ENCODE measurements at regions of chr7 and their contacts with region 1.

Region 1: DNA sequence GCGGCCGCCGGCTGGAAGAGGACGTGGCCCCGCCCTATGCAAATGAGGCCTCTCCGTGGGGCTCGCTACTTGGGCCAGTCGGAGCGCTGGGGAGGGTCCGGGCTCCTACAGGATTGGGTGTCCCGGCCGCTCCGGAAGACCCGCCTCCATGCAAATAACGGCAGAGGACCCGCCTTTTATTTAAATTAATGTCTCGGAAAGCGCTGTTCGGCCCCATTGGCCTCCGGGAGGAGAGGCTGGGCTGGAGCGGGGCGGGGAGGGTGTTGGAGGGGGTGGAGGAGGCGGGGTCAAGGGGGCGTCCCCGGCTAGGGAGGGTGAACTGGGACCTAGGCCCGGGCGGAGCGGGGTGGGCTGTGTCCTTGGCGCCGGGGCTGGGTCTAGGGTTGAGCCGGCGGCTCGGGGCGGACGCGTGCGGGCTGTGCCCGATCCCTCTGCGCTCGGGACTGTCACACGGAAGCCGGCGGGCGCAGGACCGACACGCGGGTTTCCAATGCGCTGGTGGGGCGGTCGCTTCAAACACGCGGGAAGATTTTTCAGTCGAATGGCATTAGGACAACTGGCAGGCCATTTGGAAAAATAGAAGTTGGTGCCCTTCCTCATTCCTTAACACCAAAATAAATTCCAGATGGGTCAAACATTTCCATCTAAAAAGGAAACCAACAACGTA is 344 bp upstream of the POLM start:
- DNase-seq: peak; percentile 100
- ATAC-seq: peak; percentile 91

Region 2: DNA sequence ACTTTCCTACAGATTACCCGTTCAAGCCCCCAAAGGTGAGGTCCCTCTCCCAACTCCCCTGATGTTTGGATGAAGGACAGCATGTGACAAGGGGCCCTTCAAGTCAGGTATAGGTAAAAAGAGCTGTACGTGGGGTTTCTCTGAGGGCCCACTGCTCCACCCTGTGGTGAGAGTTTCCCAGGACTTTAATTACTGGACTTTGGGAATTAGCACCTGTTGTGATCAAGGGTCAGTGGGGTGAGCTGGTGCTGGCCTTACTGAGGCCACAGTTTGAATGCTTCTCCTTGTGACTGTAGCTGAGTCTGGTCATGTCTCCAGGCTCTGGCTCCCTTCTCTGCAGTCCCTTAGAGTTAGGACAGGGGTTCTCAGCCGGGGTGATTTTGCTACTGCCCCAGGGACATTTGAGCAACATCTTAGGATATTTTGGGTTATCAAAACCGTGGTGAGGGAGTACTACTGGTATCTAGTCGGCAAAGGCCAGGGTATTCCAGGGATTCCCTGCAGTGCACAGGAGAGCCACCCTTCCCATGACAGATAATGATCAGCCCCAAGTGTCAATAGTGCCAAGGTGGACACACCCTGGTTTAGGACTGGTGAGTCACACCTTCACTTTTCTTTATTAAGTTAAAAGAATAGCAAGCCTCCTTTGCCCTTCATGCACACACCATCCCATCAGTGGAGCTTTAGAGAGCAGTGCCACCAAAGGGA is 139.5 kb before region 1 on chr7:
- intact Hi-C with region 1: no loop called
- DNase-seq: no peak
- ATAC-seq: peak; percentile 22

Region 3: DNA sequence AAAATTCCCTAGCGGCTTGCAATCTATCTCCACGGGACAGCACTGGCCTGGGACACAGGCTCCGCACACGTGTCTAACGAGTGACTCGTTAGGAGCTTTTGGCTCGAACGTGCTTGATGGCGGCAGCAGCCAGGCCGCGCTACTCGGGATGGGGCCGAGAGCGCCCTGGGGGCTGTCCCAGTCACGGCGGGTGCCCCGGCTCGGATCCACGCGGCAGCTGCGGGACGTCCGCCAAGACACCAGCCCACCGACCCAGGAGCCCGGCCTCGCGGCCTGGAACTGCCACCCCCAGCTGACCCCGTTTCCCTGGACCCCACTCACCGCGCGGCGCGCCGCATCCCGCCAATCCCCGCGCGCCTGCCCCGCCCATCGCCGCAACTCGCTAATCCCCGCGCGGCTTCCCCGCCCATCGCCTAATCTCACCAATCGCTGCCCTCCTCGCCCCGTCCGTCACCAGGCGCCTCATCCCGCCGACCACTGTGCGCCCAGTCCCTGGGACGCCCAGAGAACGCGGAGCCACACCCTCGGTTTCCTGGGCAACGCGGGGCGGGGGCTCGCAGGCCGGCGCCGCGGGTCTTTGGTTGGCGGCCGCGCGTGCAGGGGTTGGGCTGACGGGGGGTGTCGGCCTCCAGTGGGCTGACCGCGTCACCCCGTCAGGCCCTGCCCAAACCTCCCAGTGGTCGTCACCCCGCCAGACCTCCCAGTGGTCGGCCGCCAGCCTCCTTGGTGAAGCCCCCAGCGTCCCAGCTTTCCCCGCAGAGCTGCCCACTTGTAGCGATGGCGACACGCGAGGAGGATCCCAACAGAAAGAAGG is 40.7 kb after region 1 on chr7 and contains the start of gene POLD2:
- intact Hi-C with region 1: loop called (anchors 5 kb)
- DNase-seq: peak; percentile 99
- ATAC-seq: peak; percentile 98
- total RNA-seq, gene POLD2: 75.3 TPM